ENCODE measurements at regions of chr7 and their contacts with region 1.

Region 1: DNA sequence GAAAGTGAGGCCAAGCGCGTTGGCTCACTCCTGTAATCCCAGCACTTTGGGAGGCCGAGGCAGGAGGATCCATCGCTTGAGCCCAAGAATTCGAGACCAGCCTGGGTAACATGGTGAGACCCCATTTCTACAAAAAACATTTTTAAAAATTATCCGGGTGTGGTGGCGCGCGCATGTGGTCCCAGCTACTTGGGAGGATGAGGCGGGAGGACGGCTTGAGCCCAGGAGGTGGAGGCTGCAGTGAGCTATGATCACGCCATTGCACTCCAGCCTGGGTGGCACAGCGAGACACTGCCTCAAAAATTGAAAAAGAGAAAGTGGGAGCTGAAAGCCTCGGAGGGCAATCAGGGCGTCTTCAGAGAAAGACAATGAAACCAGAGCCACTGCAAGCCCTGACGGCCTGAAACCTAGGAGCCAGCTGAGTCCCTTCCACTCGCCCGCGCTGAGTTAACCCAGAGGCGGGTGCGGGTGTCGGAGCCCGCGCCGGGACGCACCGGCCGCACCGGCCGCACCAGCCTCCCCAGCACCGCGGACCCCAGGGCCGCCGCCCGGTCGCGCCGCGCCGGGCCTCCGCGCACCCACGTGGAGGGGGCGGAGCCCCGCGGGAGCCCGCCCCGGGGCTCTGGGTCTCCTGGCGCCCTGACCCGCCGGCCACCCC is 22.4 kb downstream of the ZFAND2A start:
- DNase-seq: no peak
- ATAC-seq: peak; percentile 62
- H3K4me3 ChIP-seq: peak overlapping the region; percentile 77 to 78
- H3K4me3 Mint-ChIP-seq: peak overlapping the region; percentile 90
- H3K27ac ChIP-seq: peak overlapping the region; percentile 81 to 91
- H3K27ac Mint-ChIP-seq: peak overlapping the region; percentile 88
- H3K4me1 ChIP-seq: peaks cover 14% of the 10 kb centered on the region
- H3K4me1 Mint-ChIP-seq: peaks cover 17% of the 10 kb centered on the region
- H3K27me3 ChIP-seq: no peaks in the 10 kb centered on the region
- H3K27me3 Mint-ChIP-seq: no peaks in the 10 kb centered on the region
- CTCF ChIP-seq: no peak

Region 2: GRCh38 chr7:923108-924041 is 214.3 kb before region 1 on chr7:
- CTCF ChIA-PET with region 1: no interaction called
- POLR2A ChIA-PET with region 1: no interaction called
- intact Hi-C with region 1: loop called in 1 of 2 experiments (anchors 1 kb)
- DNase-seq: peak; percentile 82 to 97 (median 95)
- ATAC-seq: peak; percentile 72
- H3K4me3 ChIP-seq: peak overlapping the region; percentile 72 to 94
- H3K4me3 Mint-ChIP-seq: peak overlapping the region; percentile 86
- H3K27ac ChIP-seq: peak overlapping the region; percentile 83 to 87
- H3K27ac Mint-ChIP-seq: peak overlapping the region; percentile 95
- H3K4me1 ChIP-seq: peaks cover 50% of the 10 kb centered on the region
- H3K4me1 Mint-ChIP-seq: peaks cover 34% of the 10 kb centered on the region
- H3K27me3 ChIP-seq: no peaks in the 10 kb centered on the region
- H3K27me3 Mint-ChIP-seq: no peaks in the 10 kb centered on the region
- CTCF ChIP-seq: no peak

Region 3: DNA sequence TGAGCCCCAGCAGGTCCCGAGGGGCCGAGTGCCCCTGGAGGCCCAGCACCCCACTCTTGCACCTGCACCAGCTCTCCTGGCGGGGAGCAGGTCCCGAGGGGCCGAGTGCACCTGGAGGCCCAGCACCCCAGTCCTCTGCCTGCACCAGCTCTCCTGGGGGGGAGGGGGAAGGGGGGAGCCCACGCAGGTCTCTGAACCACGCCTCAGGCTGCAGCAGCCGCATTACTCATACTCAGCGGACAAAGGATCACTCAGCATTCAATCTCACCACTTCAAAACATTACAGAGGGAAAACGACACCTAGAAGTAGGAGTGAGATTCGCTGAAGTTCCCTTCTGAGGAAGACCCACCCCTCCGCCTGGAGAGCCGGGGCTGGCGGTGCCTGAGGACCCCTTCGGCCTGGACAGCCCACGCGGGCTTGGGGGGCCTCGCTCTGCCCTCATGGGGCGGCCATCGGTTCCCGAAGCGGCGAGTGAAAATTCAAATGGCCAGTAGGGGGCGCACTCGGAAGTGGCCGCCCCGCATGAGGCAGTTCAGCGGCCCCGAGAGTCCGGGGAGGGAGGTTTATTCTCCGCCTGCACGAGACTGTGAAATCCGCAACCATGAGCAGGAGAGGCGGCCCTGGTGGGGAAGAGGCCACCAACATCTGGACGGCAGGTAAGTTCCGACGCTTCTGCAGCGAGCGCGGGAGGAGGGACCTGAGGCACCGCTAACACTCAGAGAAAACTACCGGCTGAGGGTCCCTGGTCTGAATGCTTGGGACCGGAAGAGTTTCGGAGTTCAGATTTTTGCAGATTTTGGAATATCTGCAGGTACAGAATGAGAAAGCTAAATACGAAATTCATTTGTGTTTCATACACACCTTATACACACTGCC is 50.8 kb before region 1 on chr7:
- CTCF ChIA-PET with region 1: no interaction called
- POLR2A ChIA-PET with region 1: no interaction called
- intact Hi-C with region 1: loop called (anchors 2 to 5 kb)
- DNase-seq: peak; percentile 42 to 88 (median 75)
- ATAC-seq: peak; percentile 84
- H3K4me3 ChIP-seq: peak overlapping the region; percentile 18 to 58
- H3K4me3 Mint-ChIP-seq: peak overlapping the region; percentile 75
- H3K27ac ChIP-seq: no peak overlapping the region
- H3K27ac Mint-ChIP-seq: no peak overlapping the region
- H3K4me1 ChIP-seq: peaks cover 11% of the 10 kb centered on the region
- H3K4me1 Mint-ChIP-seq: peaks cover 11% of the 10 kb centered on the region
- H3K27me3 ChIP-seq: no peaks in the 10 kb centered on the region
- H3K27me3 Mint-ChIP-seq: no peaks in the 10 kb centered on the region
- CTCF ChIP-seq: peak; percentile 98

Region 4: DNA sequence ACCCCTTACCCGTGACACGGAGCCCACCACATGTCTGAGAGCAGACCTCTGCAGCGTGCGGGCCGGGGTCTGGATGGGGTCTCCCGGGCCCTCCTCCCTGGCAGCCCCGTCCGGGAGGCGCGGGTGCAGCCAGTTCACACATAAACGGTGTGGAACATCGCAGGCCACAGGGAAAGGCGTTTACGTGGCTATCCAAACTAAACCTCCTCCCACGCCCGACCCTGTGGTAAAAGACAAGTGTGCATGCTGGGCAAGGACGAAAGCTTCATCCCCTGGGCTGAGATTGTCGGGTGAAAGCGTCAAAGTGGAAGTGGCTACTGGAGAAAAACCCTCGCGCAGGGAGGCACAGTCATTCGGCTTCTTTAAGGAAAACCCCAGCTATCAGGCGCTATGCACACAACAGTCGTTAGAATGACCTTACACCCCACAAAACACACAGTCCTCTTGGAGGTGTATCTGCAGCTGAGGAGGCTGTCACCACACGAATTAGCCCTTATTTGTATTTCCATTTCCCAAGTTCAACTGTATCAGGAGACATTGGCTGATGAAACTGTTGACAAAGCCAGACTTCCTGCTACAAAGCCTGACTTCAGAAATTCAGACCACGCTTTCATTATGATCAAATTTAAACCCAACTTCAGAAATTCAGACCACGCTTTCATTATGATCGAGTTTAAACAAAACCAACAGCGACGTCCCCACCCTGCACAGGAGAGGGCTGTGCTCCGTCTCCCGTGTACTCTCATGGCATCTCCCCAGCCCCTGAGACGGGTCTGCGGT is 34.4 kb before region 1 on chr7:
- CTCF ChIA-PET with region 1: no interaction called
- POLR2A ChIA-PET with region 1: no interaction called
- intact Hi-C with region 1: no loop called
- DNase-seq: peak in 1 of 9 experiments; percentile 25
- ATAC-seq: no peak
- H3K4me3 ChIP-seq: peak overlapping the region in 1 of 2 experiments; percentile 46
- H3K4me3 Mint-ChIP-seq: peak overlapping the region; percentile 73
- H3K27ac ChIP-seq: peak overlapping the region in 1 of 2 experiments; percentile 13
- H3K27ac Mint-ChIP-seq: no peak overlapping the region
- H3K4me1 ChIP-seq: peaks cover 5% of the 10 kb centered on the region
- H3K4me1 Mint-ChIP-seq: peaks cover 16% of the 10 kb centered on the region
- H3K27me3 ChIP-seq: no peaks in the 10 kb centered on the region
- H3K27me3 Mint-ChIP-seq: no peaks in the 10 kb centered on the region
- CTCF ChIP-seq: no peak

Region 5: GRCh38 chr7:1169409-1170368 is 32.0 kb after region 1 on chr7:
- CTCF ChIA-PET with region 1: interaction called, 6 read pairs
- POLR2A ChIA-PET with region 1: no interaction called
- intact Hi-C with region 1: loop called (anchors 1 kb)
- DNase-seq: peak; percentile 44 to 97 (median 93)
- ATAC-seq: peak; percentile 100
- H3K4me3 ChIP-seq: peak overlapping the region; percentile 42 to 50
- H3K4me3 Mint-ChIP-seq: peak overlapping the region; percentile 85
- H3K27ac ChIP-seq: peak overlapping the region; percentile 40 to 41
- H3K27ac Mint-ChIP-seq: peak overlapping the region; percentile 92
- H3K4me1 ChIP-seq: peaks cover 8% of the 10 kb centered on the region
- H3K4me1 Mint-ChIP-seq: peaks cover 12% of the 10 kb centered on the region
- H3K27me3 ChIP-seq: no peaks in the 10 kb centered on the region
- H3K27me3 Mint-ChIP-seq: no peaks in the 10 kb centered on the region
- CTCF ChIP-seq: peak; percentile 77

Region 6: DNA sequence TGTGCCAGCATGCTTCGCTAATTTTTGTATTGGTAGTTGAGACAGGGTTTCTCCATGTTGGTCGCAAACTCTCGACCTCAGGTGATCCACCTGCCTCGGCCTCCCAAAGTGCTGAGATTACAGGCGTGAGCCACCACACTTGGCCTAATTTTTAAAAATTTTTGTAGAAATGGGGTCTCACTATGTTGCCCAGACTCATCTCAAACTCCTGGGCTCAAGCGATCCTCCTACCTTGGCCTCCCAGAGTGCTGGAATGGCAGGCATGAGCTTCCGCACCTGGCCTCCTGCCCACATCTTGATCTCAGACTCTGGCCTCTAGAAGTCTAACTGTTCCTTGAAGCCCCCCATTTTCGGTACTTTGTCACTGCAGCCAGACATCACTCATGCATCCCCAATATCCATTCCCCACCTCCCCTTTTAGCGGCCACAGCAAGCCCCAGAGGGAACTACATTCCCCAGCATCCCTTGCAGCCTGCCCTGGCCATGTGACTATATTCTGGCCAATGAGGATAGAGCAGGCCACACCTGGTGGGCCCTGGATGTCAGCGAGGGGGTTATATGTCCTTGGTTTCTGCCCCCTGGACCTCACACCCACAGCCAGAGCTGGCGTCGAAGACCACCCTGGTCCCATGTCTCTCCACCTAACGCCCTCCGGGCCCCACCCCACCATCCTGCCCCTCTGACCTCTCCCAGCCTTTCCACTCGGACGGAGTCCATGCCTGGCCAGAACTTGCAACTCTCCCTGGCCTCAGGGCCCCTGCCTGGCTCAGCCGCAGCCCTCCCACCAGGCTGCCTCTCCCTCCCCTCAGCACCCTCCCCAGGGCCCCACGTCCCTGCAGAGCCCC is 287.9 kb after region 1 on chr7:
- CTCF ChIA-PET with region 1: no interaction called
- POLR2A ChIA-PET with region 1: no interaction called
- intact Hi-C with region 1: no loop called
- DNase-seq: no peak
- ATAC-seq: peak; percentile 51
- H3K4me3 ChIP-seq: no peak overlapping the region
- H3K4me3 Mint-ChIP-seq: no peak overlapping the region
- H3K27ac ChIP-seq: no peak overlapping the region
- H3K27ac Mint-ChIP-seq: no peak overlapping the region
- H3K4me1 ChIP-seq: no peaks in the 10 kb centered on the region
- H3K4me1 Mint-ChIP-seq: no peaks in the 10 kb centered on the region
- H3K27me3 ChIP-seq: peaks cover 0 to 6% of the 10 kb centered on the region in 2 experiments
- H3K27me3 Mint-ChIP-seq: peaks cover 9% of the 10 kb centered on the region
- CTCF ChIP-seq: no peak

Measured in CD8-positive, alpha-beta T cell (primary cell).